GM13977 (cell line): ENCODE measurements at regions of chr3 and their contacts with region 1.

Region 1: DNA sequence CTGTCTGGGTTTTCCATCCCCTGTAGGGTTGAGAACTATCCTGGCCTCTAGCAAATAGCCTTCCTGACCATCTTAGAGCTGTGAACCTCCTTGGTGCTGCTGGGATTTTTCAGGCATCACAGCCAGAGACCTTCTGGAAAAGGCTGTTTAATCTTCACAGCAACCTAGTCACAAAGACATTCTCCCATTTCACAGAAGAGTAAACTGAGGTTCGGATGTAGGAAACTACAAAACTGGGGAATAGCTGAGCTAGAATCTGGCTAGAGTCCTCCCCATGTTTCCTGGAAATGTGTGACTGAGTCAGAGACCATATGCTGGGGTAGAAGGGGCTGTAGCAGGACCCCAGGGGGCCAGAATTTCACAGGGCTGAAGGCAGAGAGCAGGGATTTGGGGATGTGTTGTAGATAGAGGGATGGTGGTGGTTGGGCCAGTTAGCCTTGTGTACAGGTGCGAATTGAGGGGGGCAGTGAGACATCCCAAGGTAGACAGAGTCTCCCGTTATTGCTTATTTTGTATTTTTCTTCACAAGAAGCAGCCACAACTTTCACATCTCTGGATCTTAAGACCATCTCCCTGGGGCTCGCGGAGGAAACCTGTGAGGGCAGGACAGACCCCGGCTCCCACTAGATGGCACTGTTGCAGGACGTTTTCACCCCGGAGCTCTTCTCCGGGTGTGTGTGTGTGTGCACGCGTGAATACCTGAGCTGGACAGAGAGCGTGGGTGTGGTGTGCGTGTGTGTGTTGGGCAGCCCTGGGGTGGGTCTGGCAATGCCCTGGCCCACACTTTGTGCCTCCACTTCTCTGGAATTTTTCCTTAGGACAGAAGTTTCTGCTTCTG is 66.9 kb upstream of the PRR23C start:
- DNase-seq: peak; percentile 68
- CTCF ChIP-seq: peak; percentile 79

Region 2: DNA sequence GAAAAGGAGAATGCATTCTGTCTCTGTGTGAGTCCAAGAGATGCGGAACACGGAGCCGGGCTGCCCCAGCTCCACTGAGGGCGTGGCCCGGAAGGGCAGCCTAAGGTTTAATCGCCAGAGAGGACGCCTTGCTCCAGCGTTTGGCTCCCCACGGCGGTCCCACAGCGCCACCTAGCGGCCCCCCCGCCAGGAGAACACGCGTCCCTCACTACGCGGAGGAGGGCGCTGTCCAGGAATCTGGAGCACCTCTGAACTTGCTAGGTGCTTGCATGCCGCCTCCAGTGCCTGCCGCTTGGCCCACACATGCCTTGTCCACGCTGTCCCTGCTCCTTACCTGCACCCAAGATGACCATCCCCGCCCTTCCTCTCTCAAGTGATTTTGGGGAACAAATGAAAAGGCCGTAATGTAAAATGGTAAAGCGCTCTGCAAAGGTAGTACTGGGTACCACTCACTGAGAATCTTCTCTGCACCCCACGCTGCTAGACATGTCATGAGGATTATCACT is 217.8 kb after region 1 on chr3:
- in situ Hi-C with region 1: loop called (anchors 25 kb)
- DNase-seq: peak; percentile 87
- CTCF ChIP-seq: peak; percentile 100